Esophagus muscularis mucosa (tissue), 4 donors: ENCODE measurements at regions of chr18 and their contacts with region 1.

Region 1: GRCh38 chr18:74896390-74896991 is 298.8 kb downstream of the ZNF407 start:
- DNase-seq: no peak
- H3K4me3 ChIP-seq: no peak overlapping the region
- H3K27ac ChIP-seq: no peak overlapping the region
- H3K4me1 ChIP-seq: no peaks in the 10 kb centered on the region
- H3K27me3 ChIP-seq: no peaks in the 10 kb centered on the region
- CTCF ChIP-seq: peak; percentile 52 to 62 (median 56)
- EP300 ChIP-seq: no peak
- POLR2A ChIP-seq: no peak

Region 2: GRCh38 chr18:74597662-74598349 is 298.7 kb before region 1 on chr18 and contains the start of gene ZNF407:
- intact Hi-C with region 1: no loop called
- DNase-seq: peak; percentile 99
- H3K4me3 ChIP-seq: peak within 1 kb of the TSS; percentile 86 to 98 (median 92)
- H3K27ac ChIP-seq: peak within 1 kb of the TSS; percentile 97 to 99 (median 98)
- H3K4me1 ChIP-seq: peaks cover 24 to 48% (median 33%) of the 10 kb centered on the region in 4 donors
- H3K27me3 ChIP-seq: no peaks in the 10 kb centered on the region
- CTCF ChIP-seq: no peak
- EP300 ChIP-seq: no peak
- POLR2A ChIP-seq: no peak
- total RNA-seq, gene ZNF407: 13.9 to 19.1 (median 17.2) TPM

Region 3: GRCh38 chr18:74951165-74951760 is 54.8 kb after region 1 on chr18:
- intact Hi-C with region 1: no loop called
- DNase-seq: no peak
- H3K4me3 ChIP-seq: no peak overlapping the region
- H3K27ac ChIP-seq: no peak overlapping the region
- H3K4me1 ChIP-seq: peaks cover 5 to 26% (median 21%) of the 10 kb centered on the region in 4 donors
- H3K27me3 ChIP-seq: no peaks in the 10 kb centered on the region
- CTCF ChIP-seq: no peak
- EP300 ChIP-seq: no peak
- POLR2A ChIP-seq: no peak

Region 4: DNA sequence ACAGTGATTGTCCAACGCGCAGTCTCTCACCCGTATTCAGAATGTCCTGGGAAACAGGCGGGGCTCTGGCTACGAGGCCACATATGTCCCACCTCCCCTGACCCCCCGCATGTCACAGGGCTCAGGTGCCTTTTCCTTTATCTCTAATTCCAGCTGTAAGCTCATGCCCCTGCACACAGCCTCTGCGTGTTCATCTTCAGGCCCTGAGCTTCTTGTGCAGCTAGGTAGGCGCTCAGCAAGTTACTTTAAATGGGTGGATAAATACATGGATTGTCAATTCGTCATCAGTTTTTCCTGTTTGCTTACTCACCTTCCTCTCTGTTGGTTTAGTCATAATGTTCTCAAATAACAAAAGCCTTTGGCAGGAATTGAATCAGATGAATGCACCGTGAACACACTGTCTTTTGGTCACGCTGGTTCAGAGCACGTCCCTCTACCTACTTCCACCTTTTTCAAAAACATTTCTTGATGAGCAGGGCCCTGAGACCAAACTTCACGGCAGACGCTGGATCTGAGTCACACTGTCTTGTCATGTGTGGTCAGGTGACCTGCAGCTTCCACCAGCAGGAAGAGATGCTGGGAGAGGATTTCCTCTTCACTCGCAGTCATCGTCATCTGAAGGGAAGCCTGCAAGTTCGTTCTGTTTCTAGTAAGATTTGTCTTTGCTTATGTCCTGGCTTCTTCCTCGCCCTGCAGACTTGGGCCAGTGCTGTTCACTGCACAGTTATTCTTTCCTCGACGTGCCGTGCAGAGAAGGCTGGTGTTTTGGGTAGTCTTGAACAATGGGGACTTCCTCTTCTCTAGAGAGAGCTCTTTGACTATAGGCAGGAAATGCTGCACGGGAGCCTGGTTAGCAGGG is 174.4 kb after region 1 on chr18:
- intact Hi-C with region 1: no loop called
- DNase-seq: no peak
- H3K4me3 ChIP-seq: peak overlapping the region in 3 of 4 donors; percentile 5 to 18 (median 7)
- H3K27ac ChIP-seq: peak overlapping the region; percentile 40 to 69 (median 51)
- H3K4me1 ChIP-seq: peaks cover 0 to 8% (median 6%) of the 10 kb centered on the region in 4 donors
- H3K27me3 ChIP-seq: no peaks in the 10 kb centered on the region
- CTCF ChIP-seq: no peak
- EP300 ChIP-seq: no peak
- POLR2A ChIP-seq: no peak

Region 5: GRCh38 chr18:75478996-75479880 is 582.7 kb after region 1 on chr18:
- intact Hi-C with region 1: loop called (anchors 10 kb)
- DNase-seq: no peak
- H3K4me3 ChIP-seq: no peak overlapping the region
- H3K27ac ChIP-seq: no peak overlapping the region
- H3K4me1 ChIP-seq: peaks cover 0 to 10% (median 7%) of the 10 kb centered on the region in 4 donors
- H3K27me3 ChIP-seq: no peaks in the 10 kb centered on the region
- CTCF ChIP-seq: peak; percentile 53 to 64 (median 62)
- EP300 ChIP-seq: no peak
- POLR2A ChIP-seq: no peak